AG04450 (cell line): ENCODE measurements at regions of chr10 and their contacts with region 1.

Region 1: DNA sequence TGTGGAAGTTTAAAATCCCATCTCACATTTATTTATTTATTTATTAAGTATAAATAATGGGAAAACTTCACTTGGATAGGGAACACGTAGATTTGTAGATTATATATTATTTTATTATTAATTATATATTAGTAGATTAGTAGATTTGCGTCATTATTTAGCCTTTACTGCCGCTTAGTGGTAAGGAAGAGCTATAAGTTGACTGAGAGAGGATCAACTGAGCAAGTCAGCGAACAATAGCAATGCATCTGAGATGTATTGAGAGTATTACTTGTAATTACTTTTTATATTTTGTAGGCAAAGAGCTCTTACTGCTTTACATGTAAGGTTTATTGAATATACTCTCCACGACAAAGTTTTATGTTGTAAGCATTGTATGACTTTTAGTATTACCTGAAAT is 244.5 kb upstream of the ANKRD30A start:
- DNase-seq: peak; percentile 8
- H3K4me3 ChIP-seq: no peak overlapping the region
- H3K27ac ChIP-seq: no peak overlapping the region
- H3K27me3 ChIP-seq: peaks cover 2% of the 10 kb centered on the region
- CTCF ChIP-seq: peak; percentile 78

Region 2: GRCh38 chr10:36739884-36740445 is 140.9 kb before region 1 on chr10:
- CTCF ChIA-PET with region 1: no interaction called
- POLR2A ChIA-PET with region 1: no interaction called
- DNase-seq: no peak
- H3K4me3 ChIP-seq: no peak overlapping the region
- H3K27ac ChIP-seq: no peak overlapping the region
- H3K27me3 ChIP-seq: no peaks in the 10 kb centered on the region
- CTCF ChIP-seq: no peak

Region 3: GRCh38 chr10:36779234-36779846 is 101.6 kb before region 1 on chr10:
- CTCF ChIA-PET with region 1: interaction called, 21 read pairs
- POLR2A ChIA-PET with region 1: no interaction called
- DNase-seq: peak; percentile 64
- H3K4me3 ChIP-seq: no peak overlapping the region
- H3K27ac ChIP-seq: no peak overlapping the region
- H3K27me3 ChIP-seq: no peaks in the 10 kb centered on the region
- CTCF ChIP-seq: peak; percentile 86

Region 4: DNA sequence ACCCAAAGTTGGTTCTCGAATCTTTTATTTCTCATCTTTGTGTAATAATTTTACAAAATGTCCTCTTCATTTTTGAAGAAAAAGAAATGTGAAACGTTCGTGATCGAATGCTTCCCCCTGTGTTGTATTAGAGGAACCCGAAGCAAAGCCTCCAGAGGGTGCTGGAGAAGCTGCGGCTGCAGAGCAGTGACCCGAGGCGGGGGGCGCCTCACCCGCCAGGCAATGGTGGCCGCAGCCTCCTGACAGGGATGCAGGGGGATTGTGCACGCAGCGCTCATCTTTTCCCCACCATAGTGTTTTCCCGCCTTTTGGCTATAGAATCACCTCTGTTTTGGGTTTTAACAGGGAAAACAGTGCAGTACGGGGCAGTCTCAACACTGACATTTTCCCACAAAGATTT is 63.0 kb before region 1 on chr10:
- CTCF ChIA-PET with region 1: no interaction called
- POLR2A ChIA-PET with region 1: no interaction called
- DNase-seq: no peak
- H3K4me3 ChIP-seq: no peak overlapping the region
- H3K27ac ChIP-seq: no peak overlapping the region
- H3K27me3 ChIP-seq: no peaks in the 10 kb centered on the region
- CTCF ChIP-seq: no peak

Region 5: DNA sequence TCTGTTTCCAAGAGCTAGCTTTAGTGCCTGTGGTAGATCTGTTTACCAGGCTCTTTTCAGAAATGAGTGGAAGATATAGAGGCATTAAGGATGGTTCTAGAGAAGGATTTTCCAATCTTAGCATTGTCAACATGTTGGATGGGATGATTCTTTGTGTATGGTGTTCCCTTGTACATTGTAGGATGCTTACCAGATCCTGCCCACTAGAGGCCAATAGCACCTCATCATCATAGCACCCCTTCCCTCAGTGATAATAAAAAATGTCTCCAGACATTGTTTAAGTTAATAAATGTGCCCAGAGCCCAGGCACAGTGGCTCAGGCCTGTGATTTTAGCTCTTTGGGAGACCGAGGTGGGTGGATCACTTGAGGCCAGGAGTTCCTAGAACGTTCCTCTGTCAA is 365.7 kb after region 1 on chr10:
- CTCF ChIA-PET with region 1: no interaction called
- POLR2A ChIA-PET with region 1: no interaction called
- DNase-seq: no peak
- H3K4me3 ChIP-seq: no peak overlapping the region
- H3K27ac ChIP-seq: no peak overlapping the region
- H3K27me3 ChIP-seq: no peaks in the 10 kb centered on the region
- CTCF ChIP-seq: no peak